Transverse colon (tissue), 4 donors: ENCODE measurements at regions of chr3 and their contacts with region 1.

Region 1: DNA sequence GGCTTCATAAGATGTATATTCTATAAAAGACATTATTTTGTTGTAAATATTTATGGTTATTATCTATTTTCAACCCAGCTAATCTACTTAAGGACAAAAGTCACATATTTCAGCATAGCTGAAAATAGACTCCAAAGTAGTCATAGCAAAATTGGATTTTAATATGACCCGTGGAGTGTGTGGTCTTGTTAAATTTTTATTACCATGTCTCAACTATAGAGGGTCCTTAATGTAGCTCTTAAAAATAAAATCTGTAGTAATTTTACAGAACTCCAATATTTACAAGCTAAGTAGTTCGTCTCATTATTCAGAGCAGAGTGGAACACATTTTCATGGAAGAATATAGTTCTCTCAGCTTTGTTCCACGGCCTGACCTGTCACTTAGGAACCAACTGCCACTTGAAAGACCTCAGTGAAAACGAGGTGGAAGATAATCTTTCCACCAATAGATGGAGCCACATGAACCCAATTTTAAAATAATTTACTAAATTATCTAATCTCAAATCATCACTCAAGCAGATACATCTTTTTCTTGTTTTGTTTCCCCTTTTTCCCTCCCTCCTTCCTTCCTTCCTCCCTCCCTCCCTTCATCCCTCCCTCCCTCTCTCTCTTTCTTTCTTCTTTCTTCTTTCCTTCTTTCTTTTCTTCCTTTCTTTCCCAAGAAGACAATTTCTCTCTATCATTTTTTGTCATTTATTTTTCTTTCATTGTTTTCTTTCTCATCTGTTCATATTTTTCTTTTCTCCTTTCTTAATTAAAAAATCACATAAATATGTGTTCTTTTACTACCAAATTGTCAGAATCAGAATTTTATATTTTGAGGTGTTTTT is 97.2 kb downstream of the CLDN1 start:
- DNase-seq: no peak
- H3K4me3 ChIP-seq: no peak overlapping the region
- H3K27ac ChIP-seq: no peak overlapping the region
- H3K4me1 ChIP-seq: no peaks in the 10 kb centered on the region
- H3K27me3 ChIP-seq: no peaks in the 10 kb centered on the region
- CTCF ChIP-seq: peak; percentile 32 to 48 (median 44)
- EP300 ChIP-seq: no peak
- POLR2A ChIP-seq: no peak

Region 2: GRCh38 chr3:190321789-190322603 is 96.9 kb after region 1 on chr3 and contains the start of gene CLDN1:
- in situ Hi-C with region 1: loop called in 1 of 4 experiments (anchors 10 kb)
- intact Hi-C with region 1: loop called (anchors 10 kb)
- DNase-seq: peak; percentile 84
- H3K4me3 ChIP-seq: peak within 1 kb of the TSS; percentile 27 to 55 (median 39)
- H3K27ac ChIP-seq: peak within 1 kb of the TSS in 1 of 4 donors; percentile 58
- H3K4me1 ChIP-seq: peaks cover 0 to 7% (median 5%) of the 10 kb centered on the region in 4 donors
- H3K27me3 ChIP-seq: peaks cover 11% of the 10 kb centered on the region
- CTCF ChIP-seq: peak; percentile 79 to 97 (median 96)
- EP300 ChIP-seq: no peak
- POLR2A ChIP-seq: no peak
- total RNA-seq, gene CLDN1: 0.37 to 0.95 (median 0.82) TPM in 3 of 4 donors, not detected in the other